Activated CD4-positive, alpha-beta T cell treated with anti-CD3 and anti-CD28 coated beads, Interleukin-2, amount 10 ng/mL, durations not matched to agents 24 days and 14 days (primary cell): ENCODE measurements at regions of chr11 and their contacts with region 1.

Region 1: GRCh38 chr11:32893343-32894148 is 935 bp downstream of the QSER1 start:
- DNase-seq: peak; percentile 82
- H3K4me3 Mint-ChIP-seq: peak overlapping the region; percentile 98
- H3K27ac Mint-ChIP-seq: peak overlapping the region; percentile 98
- H3K4me1 Mint-ChIP-seq: peaks cover 27% of the 10 kb centered on the region
- H3K27me3 Mint-ChIP-seq: peaks cover 10% of the 10 kb centered on the region

Region 2: GRCh38 chr11:32583459-32584271 is 309.9 kb before region 1 on chr11 and contains the start of gene EIF3M:
- intact Hi-C with region 1: loop called (anchors 5 kb)
- DNase-seq: peak; percentile 99
- H3K4me3 Mint-ChIP-seq: peak within 1 kb of the TSS; percentile 98
- H3K27ac Mint-ChIP-seq: peak within 1 kb of the TSS; percentile 98
- H3K4me1 Mint-ChIP-seq: peaks cover 25% of the 10 kb centered on the region
- H3K27me3 Mint-ChIP-seq: no peaks in the 10 kb centered on the region
- total RNA-seq, gene EIF3M: 348 and 351 TPM in 2 replicates

Region 3: GRCh38 chr11:32918427-32918826 is 24.9 kb after region 1 on chr11:
- intact Hi-C with region 1: no loop called
- DNase-seq: no peak
- H3K4me3 Mint-ChIP-seq: no peak overlapping the region
- H3K27ac Mint-ChIP-seq: no peak overlapping the region
- H3K4me1 Mint-ChIP-seq: peaks cover 19% of the 10 kb centered on the region
- H3K27me3 Mint-ChIP-seq: no peaks in the 10 kb centered on the region

Region 4: DNA sequence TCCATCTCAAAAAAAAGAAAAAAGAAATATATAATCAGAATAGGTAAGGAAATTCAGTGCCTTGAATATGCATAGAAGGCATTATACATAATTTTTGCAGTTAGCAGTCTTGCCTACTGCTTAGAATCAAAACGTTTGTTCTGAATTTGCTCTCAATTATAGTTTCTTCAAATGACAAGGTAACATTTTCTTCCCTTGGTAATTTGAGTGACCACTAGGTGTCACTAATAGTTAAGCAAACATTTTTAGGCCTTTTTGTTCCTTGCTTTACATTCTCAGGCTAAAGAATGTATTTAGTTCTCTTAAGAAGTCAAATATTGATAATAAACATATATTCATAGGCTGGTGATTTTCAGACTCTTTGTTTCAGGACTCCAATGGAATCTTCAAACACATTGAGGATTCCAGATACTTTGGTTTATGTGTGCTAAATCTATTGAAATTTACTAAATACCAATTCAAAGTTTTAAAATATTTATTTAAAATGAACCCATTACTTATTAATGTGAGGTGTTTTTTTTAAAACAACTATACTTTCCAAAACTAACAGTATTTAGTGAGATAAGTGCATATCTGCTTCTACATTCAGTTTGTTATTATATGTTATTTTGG is 67.1 kb after region 1 on chr11:
- intact Hi-C with region 1: loop called (anchors 5 kb)
- DNase-seq: no peak
- H3K4me3 Mint-ChIP-seq: no peak overlapping the region
- H3K27ac Mint-ChIP-seq: no peak overlapping the region
- H3K4me1 Mint-ChIP-seq: peaks cover 9% of the 10 kb centered on the region
- H3K27me3 Mint-ChIP-seq: no peaks in the 10 kb centered on the region

Region 5: GRCh38 chr11:33039274-33040032 is 145.9 kb after region 1 on chr11 and contains the start of gene TCP11L1:
- intact Hi-C with region 1: loop called (anchors 1 kb)
- DNase-seq: peak; percentile 94
- H3K4me3 Mint-ChIP-seq: peak within 1 kb of the TSS; percentile 93
- H3K27ac Mint-ChIP-seq: peak within 1 kb of the TSS; percentile 93
- H3K4me1 Mint-ChIP-seq: peaks cover 21% of the 10 kb centered on the region
- H3K27me3 Mint-ChIP-seq: peaks cover 12% of the 10 kb centered on the region
- total RNA-seq, gene TCP11L1: 12.5 and 14.4 TPM in 2 replicates

Region 6: GRCh38 chr11:33161120-33162005 is 267.8 kb after region 1 on chr11 and contains the start of gene CSTF3:
- intact Hi-C with region 1: loop called (anchors 2 kb)
- DNase-seq: peak; percentile 99
- H3K4me3 Mint-ChIP-seq: peak within 1 kb of the TSS; percentile 98
- H3K27ac Mint-ChIP-seq: peak within 1 kb of the TSS; percentile 100
- H3K4me1 Mint-ChIP-seq: peaks cover 33% of the 10 kb centered on the region
- H3K27me3 Mint-ChIP-seq: no peaks in the 10 kb centered on the region
- total RNA-seq, gene CSTF3: 36.6 and 38.7 TPM in 2 replicates

Region 7: DNA sequence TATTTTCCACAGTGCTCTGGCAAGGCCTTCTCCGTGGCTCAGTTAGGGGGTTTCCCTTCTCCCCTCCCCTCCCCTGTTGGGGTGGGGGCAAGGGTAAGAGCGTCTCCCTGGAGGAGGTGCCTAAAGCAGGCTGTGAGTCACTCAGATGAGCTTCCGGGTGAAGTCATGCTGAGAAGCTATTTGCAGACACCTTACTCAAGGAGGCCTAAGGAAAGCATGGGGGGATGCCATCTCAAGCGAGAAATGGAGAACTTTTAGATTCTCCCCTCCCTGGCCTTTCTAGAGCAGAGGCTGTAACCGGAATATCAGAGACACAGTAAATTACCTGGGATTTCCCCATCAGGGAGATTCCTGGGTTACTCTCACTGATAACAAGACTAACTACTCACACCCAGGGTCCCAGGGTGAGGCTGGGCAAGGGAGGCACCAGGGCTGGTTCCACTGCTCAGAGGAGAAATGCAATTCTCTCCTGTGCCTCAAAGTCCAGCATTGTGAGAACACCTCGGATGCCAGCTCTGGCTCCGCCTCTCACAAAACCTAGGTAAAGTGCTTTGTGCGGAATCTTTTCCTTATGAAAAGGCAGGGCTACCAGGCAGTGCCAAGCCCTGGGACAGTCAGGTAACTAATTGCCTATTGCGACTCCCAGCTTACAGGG is 1340.7 kb after region 1 on chr11:
- intact Hi-C with region 1: loop called (anchors 10 kb)
- DNase-seq: peak; percentile 94
- H3K4me3 Mint-ChIP-seq: peak overlapping the region; percentile 30
- H3K27ac Mint-ChIP-seq: peak overlapping the region; percentile 73
- H3K4me1 Mint-ChIP-seq: peaks cover 60% of the 10 kb centered on the region
- H3K27me3 Mint-ChIP-seq: peaks cover 1% of the 10 kb centered on the region